Activated T-helper 1 cell treated with anti-CD3 and anti-CD28 coated beads, Interleukin-12 subunit alpha, Interleukin-12 subunit beta, Interleukin-2, Interleukin-4 antibody, amounts not matched to agents 30 ng/mL and 10 ng/mL and 1 ng/mL, durations not matched to agents 14 hours and 24 hours and 36 hours (primary cell): ENCODE measurements at regions of chr1 and their contacts with region 1.

Region 1: DNA sequence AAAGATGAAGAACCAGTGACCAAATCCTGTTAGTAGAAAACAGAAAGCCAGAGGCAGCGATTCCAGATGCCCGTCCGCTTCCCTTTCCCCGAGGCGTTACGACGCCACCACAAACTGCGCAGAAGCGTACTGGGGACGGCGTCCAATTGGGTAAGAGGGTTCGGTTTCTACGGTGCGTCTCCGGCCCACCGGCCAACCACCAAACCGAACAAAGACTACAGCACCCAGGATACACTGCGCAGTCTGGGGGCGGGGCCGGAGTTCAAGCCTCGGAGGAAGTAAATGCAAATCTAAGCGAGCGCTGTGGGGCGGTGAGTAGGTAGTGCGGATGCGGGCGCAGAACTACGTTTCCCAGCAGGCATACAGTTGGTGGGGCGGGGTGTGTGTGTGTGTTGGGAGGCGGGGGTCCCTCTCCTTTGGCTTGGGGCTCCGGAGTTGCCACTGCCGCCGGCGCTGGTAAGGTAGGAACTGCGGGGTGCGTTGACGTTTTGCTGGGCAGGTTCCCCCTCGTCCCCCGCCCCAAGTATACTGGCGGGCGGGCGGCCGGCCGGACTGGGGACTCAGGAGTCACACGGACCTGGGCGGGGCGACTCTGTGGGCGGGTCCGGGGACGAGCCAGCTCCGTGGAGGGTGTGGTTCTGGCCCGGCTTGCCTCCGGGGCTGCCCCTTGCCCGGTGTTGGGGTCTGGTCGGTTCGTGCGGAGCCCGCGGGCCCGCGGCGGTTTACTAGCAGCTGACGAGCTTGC is at the starts of genes SWT1 and TRMT1L:
- DNase-seq: peak; percentile 98
- H3K4me3 Mint-ChIP-seq: peak within 1 kb of the TSS; percentile 98
- H3K27ac Mint-ChIP-seq: peak within 1 kb of the TSS; percentile 97
- H3K4me1 Mint-ChIP-seq: peaks cover 59% of the 10 kb centered on the region
- H3K27me3 Mint-ChIP-seq: no peaks in the 10 kb centered on the region
- total RNA-seq, gene SWT1: 1.3 and 2.3 TPM in 2 replicates
- total RNA-seq, gene TRMT1L: 16.7 and 21.9 TPM in 2 replicates

Region 2: DNA sequence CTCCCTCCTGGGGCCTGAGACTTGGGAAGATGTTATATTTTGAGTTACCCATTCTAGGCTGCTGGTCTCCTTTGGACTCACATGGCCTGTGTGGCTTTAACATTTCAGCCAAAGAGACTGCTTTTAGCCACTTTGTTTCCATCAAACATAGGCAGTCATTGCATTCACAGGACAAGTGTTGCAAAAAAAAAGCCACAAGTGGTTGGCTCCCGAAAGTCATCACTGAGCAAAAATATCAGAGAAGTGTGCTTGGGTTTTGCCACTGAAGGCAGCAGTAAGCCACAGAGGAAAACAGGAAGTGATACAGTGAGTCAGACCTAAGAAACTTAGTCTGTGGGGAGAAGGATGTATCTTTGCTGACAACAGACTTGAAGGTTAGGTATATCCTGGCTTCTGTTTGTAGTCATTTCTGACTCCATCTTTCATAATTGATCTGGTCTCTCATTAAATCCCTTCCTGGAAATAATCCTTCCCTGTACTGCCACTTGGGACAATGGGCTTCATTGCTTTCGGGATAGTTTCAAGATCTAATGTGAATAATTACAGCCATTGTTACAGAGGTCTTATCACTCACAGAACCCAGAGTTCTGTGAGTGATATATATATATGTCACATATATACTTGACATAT is 1200.4 kb before region 1 on chr1:
- intact Hi-C with region 1: loop called (anchors 10 kb)
- DNase-seq: peak; percentile 69
- H3K4me3 Mint-ChIP-seq: peak overlapping the region; percentile 62
- H3K27ac Mint-ChIP-seq: no peak overlapping the region
- H3K4me1 Mint-ChIP-seq: peaks cover 14% of the 10 kb centered on the region
- H3K27me3 Mint-ChIP-seq: no peaks in the 10 kb centered on the region

Region 3: GRCh38 chr1:184754476-184755225 is 402.4 kb before region 1 on chr1 and contains the start of gene EDEM3:
- intact Hi-C with region 1: loop called (anchors 1 kb)
- DNase-seq: peak; percentile 97
- H3K4me3 Mint-ChIP-seq: peak within 1 kb of the TSS; percentile 89
- H3K27ac Mint-ChIP-seq: peak within 1 kb of the TSS; percentile 77
- H3K4me1 Mint-ChIP-seq: peaks cover 29% of the 10 kb centered on the region
- H3K27me3 Mint-ChIP-seq: peaks cover 5% of the 10 kb centered on the region
- total RNA-seq, gene EDEM3: 23.8 and 28.5 TPM in 2 replicates

Region 4: DNA sequence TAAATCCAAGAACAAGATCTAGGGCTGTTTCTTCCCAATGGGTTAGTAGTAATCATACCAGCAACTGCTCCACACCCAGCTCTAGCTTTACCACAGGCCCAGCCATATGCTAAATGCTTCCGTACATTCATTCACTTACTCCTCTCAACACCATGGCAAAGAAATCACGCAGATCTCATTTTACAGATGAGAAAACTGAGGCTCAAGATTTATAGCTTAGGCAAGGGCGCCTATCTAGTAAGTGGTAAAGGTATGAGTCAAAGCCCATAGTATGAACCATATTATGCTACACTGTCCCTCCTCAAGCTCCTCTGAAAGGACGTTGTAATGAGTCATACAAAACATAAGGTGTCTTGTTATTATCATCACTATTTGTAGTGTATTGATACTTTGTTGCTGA is 264.9 kb before region 1 on chr1:
- intact Hi-C with region 1: loop called (anchors 5 kb)
- DNase-seq: no peak
- H3K4me3 Mint-ChIP-seq: no peak overlapping the region
- H3K27ac Mint-ChIP-seq: peak overlapping the region; percentile 61
- H3K4me1 Mint-ChIP-seq: peaks cover 39% of the 10 kb centered on the region
- H3K27me3 Mint-ChIP-seq: no peaks in the 10 kb centered on the region

Region 5: GRCh38 chr1:185129708-185130107 is 27.3 kb before region 1 on chr1:
- intact Hi-C with region 1: no loop called
- DNase-seq: no peak
- H3K4me3 Mint-ChIP-seq: no peak overlapping the region
- H3K27ac Mint-ChIP-seq: no peak overlapping the region
- H3K4me1 Mint-ChIP-seq: no peaks in the 10 kb centered on the region
- H3K27me3 Mint-ChIP-seq: no peaks in the 10 kb centered on the region

Region 6: GRCh38 chr1:185170291-185170848 is 13.3 kb after region 1 on chr1:
- intact Hi-C with region 1: loop called (anchors 1 kb)
- DNase-seq: peak; percentile 26
- H3K4me3 Mint-ChIP-seq: no peak overlapping the region
- H3K27ac Mint-ChIP-seq: no peak overlapping the region
- H3K4me1 Mint-ChIP-seq: peaks cover 9% of the 10 kb centered on the region
- H3K27me3 Mint-ChIP-seq: no peaks in the 10 kb centered on the region

Region 7: DNA sequence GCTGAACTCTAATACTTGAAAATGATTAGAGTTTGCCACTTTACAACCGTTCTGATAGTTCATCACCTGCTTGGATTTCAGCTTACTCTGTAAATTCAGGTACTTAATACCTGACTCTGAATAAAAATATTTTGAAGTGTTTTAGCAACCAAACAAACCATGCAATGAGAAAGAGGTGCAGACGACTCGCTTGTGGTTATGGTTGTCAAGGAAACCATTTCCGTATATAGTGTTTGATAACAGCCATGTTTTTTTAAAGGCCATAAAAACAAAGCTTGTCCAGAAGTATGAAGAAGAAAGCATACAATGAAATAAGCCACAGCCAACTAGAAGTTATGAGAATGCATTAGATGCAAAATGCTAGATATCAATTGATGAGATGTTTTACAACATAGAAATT is 410.0 kb after region 1 on chr1:
- intact Hi-C with region 1: loop called (anchors 2 kb)
- DNase-seq: peak; percentile 52
- H3K4me3 Mint-ChIP-seq: peak overlapping the region; percentile 44
- H3K27ac Mint-ChIP-seq: peak overlapping the region; percentile 82
- H3K4me1 Mint-ChIP-seq: peaks cover 58% of the 10 kb centered on the region
- H3K27me3 Mint-ChIP-seq: no peaks in the 10 kb centered on the region

Region 8: GRCh38 chr1:186375088-186375953 is 1218.3 kb after region 1 on chr1 and contains the starts of genes ODR4 and TPR:
- intact Hi-C with region 1: loop called (anchors 1 kb)
- DNase-seq: peak; percentile 96
- H3K4me3 Mint-ChIP-seq: peak within 1 kb of the TSS; percentile 100
- H3K27ac Mint-ChIP-seq: peak within 1 kb of the TSS; percentile 96
- H3K4me1 Mint-ChIP-seq: peaks cover 59% of the 10 kb centered on the region
- H3K27me3 Mint-ChIP-seq: peaks cover 4% of the 10 kb centered on the region
- total RNA-seq, gene ODR4: 15.5 and 17.7 TPM in 2 replicates
- total RNA-seq, gene TPR: 174 and 179 TPM in 2 replicates